SK-N-SH (cell line): ENCODE measurements at regions of chr6 and their contacts with region 1.

Region 1: DNA sequence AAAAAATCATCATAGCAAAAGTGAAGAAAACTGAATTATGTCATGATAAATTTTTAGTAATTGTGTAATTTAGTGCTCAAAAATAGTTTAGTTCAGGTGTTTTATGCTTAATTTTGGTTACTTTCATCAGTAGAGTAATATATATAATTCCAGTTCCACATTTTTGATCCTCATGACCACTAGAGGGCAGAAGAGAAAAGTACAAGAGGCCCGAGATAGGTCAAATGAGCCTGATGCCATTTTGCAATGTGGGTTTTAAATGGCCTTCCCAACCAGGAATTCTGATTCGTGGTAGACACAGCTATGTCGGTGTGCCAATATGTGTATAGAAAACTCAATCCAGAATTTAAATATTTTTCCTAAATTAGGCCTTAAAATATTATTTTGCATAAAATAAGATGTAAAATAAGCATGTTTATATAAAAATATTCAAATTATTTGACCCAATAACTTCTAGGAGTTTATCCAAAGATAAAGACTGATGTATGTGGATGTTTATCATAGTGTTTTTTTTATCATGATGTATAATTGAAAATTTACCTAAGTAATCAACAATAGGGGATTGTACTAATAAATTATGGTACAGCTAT is 159.7 kb upstream of the RPS6KA2 start:
- DNase-seq: peak; percentile 78
- H3K4me3 ChIP-seq: peak overlapping the region in 1 of 2 experiments; percentile 24; a peak in 1 of 4 replicates
- H3K27ac ChIP-seq: no peak overlapping the region
- H3K4me1 ChIP-seq: no peaks in the 10 kb centered on the region
- H3K27me3 ChIP-seq: no peaks in the 10 kb centered on the region
- CTCF ChIP-seq: peak; percentile 82
- EP300 ChIP-seq: no peak
- RAD21 ChIP-seq: peak; percentile 89

Region 2: GRCh38 chr6:166836785-166837718 is 50.3 kb after region 1 on chr6:
- CTCF ChIA-PET with region 1: no interaction called
- POLR2A ChIA-PET with region 1: no interaction called
- DNase-seq: no peak
- H3K4me3 ChIP-seq: no peak overlapping the region
- H3K27ac ChIP-seq: no peak overlapping the region
- H3K4me1 ChIP-seq: no peaks in the 10 kb centered on the region; a peak in 1 of 4 replicates
- H3K27me3 ChIP-seq: no peaks in the 10 kb centered on the region
- CTCF ChIP-seq: no peak
- EP300 ChIP-seq: no peak
- RAD21 ChIP-seq: no peak

Region 3: GRCh38 chr6:166862287-166862977 is 75.6 kb after region 1 on chr6:
- CTCF ChIA-PET with region 1: interaction called, 10 read pairs
- POLR2A ChIA-PET with region 1: no interaction called
- DNase-seq: peak; percentile 93
- H3K4me3 ChIP-seq: peak overlapping the region; percentile 60 to 67
- H3K27ac ChIP-seq: peak overlapping the region in 1 of 2 experiments; percentile 82; a peak in 2 of 4 replicates
- H3K4me1 ChIP-seq: peaks cover 0 to 12% of the 10 kb centered on the region in 2 experiments; a peak in 2 of 4 replicates
- H3K27me3 ChIP-seq: peaks cover 47% of the 10 kb centered on the region; the same call in 1 of the 2 replicates
- CTCF ChIP-seq: peak; percentile 14
- EP300 ChIP-seq: no peak
- RAD21 ChIP-seq: peak; percentile 27

Region 4: DNA sequence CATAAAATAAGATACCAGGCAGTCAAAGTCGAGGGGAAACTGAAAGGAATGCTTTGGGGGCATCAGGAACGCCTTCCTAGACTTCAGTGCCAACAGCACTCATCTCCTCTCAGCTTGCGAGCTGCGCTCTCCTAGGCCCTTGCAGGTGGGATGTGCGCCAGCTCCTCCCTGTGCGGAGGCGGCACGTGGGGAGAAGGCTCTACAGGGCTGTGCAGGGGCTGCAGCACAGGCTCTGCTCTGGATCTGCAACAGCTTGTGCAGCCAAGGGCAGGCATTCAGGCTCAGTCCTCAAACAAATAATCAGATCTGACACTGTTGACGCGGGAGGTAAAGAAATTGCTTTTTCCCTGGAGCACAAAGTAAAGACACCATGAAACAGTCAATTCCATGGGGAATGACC is 682.9 kb after region 1 on chr6:
- CTCF ChIA-PET with region 1: no interaction called
- POLR2A ChIA-PET with region 1: no interaction called
- DNase-seq: no peak
- H3K4me3 ChIP-seq: no peak overlapping the region
- H3K27ac ChIP-seq: no peak overlapping the region
- H3K4me1 ChIP-seq: no peaks in the 10 kb centered on the region; a peak in 1 of 4 replicates
- H3K27me3 ChIP-seq: no peaks in the 10 kb centered on the region
- CTCF ChIP-seq: no peak
- EP300 ChIP-seq: no peak
- RAD21 ChIP-seq: no peak